MCF 10A (cell line): ENCODE measurements at regions of chr20 and their contacts with region 1.

Region 1: GRCh38 chr20:19774135-19774933 is 16.3 kb downstream of the RIN2 start:
- DNase-seq: no peak
- H3K4me3 Mint-ChIP-seq: no peak overlapping the region
- H3K27ac Mint-ChIP-seq: no peak overlapping the region
- H3K4me1 Mint-ChIP-seq: peaks cover 6% of the 10 kb centered on the region
- H3K27me3 Mint-ChIP-seq: no peaks in the 10 kb centered on the region
- CTCF ChIP-seq: no peak

Region 2: GRCh38 chr20:19757487-19758132 is 16.7 kb before region 1 on chr20:
- CTCF ChIA-PET with region 1: interaction called, 14 read pairs
- POLR2A ChIA-PET with region 1: interaction called, 19 read pairs
- intact Hi-C with region 1: no loop called
- DNase-seq: peak; percentile 68
- H3K4me3 Mint-ChIP-seq: peak overlapping the region; percentile 81
- H3K27ac Mint-ChIP-seq: peak overlapping the region; percentile 70
- H3K4me1 Mint-ChIP-seq: peaks cover 35% of the 10 kb centered on the region
- H3K27me3 Mint-ChIP-seq: no peaks in the 10 kb centered on the region
- CTCF ChIP-seq: no peak

Region 3: GRCh38 chr20:19858466-19859371 is 84.4 kb after region 1 on chr20:
- CTCF ChIA-PET with region 1: no interaction called
- POLR2A ChIA-PET with region 1: no interaction called
- intact Hi-C with region 1: no loop called
- DNase-seq: peak; percentile 48
- H3K4me3 Mint-ChIP-seq: no peak overlapping the region
- H3K27ac Mint-ChIP-seq: no peak overlapping the region
- H3K4me1 Mint-ChIP-seq: peaks cover 19% of the 10 kb centered on the region
- H3K27me3 Mint-ChIP-seq: no peaks in the 10 kb centered on the region
- CTCF ChIP-seq: no peak